ENCODE measurements at regions of chr14 and their contacts with region 1.

Region 1: GRCh38 chr14:24431569-24432258 is 2.0 kb downstream of the KHNYN start:
- H3K4me3 ChIP-seq: no peak overlapping the region
- H3K27ac ChIP-seq: peak overlapping the region; percentile 43
- H3K4me1 ChIP-seq: peaks cover 3% of the 10 kb centered on the region; the same call in 1 of the 2 replicates
- CTCF ChIP-seq: peak; percentile 99

Region 2: DNA sequence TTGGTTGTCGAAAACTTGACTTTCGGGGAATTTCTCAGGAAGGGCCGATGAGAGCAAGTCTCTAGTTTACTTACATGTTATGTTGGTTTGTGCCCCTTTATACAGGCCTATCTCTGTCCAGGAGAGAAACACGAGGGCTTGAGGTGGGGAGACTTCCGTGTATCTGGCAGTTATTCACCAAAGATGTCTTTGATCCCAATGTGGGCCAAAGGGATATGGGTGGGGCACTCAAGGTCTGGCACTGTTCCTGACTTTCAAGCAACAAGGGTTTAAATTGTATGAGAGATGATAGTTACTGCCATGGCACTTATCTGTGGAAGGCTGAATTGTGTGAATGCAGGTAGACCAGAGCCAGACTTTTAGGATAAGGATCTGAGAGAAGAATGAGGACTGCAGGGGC is 615.3 kb before region 1 on chr14:
- CTCF ChIA-PET with region 1: no interaction called
- POLR2A ChIA-PET with region 1: no interaction called
- H3K4me3 ChIP-seq: no peak overlapping the region
- H3K27ac ChIP-seq: no peak overlapping the region
- H3K4me1 ChIP-seq: no peaks in the 10 kb centered on the region
- CTCF ChIP-seq: no peak

Region 3: DNA sequence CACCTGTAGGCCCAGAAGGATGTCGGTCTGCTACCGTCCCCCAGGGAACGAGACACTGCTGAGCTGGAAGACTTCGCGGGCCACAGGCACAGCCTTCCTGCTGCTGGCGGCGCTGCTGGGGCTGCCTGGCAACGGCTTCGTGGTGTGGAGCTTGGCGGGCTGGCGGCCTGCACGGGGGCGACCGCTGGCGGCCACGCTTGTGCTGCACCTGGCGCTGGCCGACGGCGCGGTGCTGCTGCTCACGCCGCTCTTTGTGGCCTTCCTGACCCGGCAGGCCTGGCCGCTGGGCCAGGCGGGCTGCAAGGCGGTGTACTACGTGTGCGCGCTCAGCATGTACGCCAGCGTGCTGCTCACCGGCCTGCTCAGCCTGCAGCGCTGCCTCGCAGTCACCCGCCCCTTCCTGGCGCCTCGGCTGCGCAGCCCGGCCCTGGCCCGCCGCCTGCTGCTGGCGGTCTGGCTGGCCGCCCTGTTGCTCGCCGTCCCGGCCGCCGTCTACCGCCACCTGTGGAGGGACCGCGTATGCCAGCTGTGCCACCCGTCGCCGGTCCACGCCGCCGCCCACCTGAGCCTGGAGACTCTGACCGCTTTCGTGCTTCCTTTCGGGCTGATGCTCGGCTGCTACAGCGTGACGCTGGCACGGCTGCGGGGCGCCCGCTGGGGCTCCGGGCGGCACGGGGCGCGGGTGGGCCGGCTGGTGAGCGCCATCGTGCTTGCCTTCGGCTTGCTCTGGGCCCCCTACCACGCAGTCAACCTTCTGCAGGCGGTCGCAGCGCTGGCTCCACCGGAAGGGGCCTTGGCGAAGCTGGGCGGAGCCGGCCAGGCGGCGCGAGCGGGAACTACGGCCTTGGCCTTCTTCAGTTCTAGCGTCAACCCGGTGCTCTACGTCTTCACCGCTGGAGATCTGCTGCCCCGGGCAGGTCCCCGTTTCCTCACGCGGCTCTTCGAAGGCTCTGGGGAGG is 120.8 kb before region 1 on chr14 and contains the start of gene LTB4R:
- CTCF ChIA-PET with region 1: interaction called, 33 read pairs
- POLR2A ChIA-PET with region 1: interaction called, 6 read pairs
- H3K4me3 ChIP-seq: no peak within 1 kb of the TSS
- H3K27ac ChIP-seq: no peak within 1 kb of the TSS
- H3K4me1 ChIP-seq: no peaks in the 10 kb centered on the region
- CTCF ChIP-seq: no peak

Region 4: DNA sequence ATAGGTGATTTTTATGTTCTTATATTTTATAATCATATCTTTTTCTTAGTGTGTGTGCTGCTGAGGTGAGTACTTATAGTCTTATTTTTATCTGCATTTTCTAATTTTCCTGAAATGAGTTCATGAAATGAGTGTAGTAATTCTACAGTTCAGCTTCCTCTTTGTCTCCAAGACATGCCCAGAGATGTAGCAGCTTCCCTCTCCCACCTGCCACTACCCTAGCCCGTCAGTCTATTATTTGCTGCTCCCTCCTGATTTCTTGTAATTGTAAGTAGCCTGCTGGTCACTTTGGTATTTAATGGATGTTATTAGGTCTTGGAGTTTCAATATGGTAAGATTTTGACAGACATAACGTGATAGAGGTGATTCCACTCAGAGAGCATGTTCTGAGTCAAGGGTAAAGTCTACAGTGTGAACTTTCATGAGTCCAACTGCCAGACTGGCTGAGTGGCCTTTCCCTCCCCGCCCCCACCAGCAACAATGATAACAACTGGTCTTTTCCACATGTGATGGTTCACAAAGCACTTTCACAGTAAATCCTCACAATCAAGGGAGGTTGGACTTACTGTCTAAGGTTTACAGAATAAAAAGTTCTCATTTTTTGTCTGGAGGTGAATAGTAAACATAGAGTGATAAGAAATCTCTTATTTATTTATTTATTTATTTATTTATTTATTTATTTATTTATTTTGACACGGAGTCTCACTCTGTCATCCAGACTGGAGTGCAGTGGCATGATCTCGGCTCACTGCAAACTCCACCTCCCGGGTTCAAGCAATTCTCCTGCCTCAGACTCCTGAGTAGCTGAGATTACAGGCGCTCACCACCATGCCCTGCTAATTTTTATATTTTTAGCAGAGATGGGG is 87.7 kb before region 1 on chr14:
- CTCF ChIA-PET with region 1: interaction called, 468 read pairs
- POLR2A ChIA-PET with region 1: no interaction called
- H3K4me3 ChIP-seq: no peak overlapping the region
- H3K27ac ChIP-seq: no peak overlapping the region
- H3K4me1 ChIP-seq: no peaks in the 10 kb centered on the region
- CTCF ChIP-seq: no peak

Region 5: DNA sequence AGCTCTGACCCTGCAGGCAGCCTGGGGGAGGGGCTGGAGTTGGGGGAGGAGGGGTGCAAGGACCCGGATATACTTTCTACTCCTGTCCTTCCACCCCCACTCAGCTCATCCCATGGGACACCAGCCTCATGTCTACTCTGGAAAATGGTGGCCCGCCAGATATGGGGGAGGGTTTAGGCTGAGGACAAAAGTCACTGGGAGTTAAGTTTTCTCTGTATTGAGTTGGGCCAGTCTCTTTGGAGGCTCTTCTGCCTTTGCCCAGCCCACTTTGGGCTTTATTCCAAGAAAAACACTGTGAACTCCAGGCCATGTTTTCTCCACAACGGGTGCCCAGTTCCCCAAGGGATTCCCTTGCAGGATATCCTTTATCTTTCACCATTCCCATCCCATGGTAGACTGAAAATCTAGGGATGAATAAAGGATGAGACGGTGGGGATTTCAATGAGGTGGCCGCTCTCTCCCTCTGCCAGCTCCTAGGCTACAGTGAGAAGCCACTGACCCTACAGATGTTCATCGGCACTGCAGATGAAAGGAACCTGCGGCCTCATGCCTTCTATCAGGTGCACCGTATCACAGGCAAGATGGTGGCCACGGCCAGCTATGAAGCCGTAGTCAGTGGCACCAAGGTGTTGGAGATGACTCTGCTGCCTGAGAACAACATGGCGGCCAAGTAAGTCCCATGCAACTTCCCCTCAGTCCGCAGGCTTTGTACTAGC is 58.9 kb before region 1 on chr14:
- CTCF ChIA-PET with region 1: interaction called, 29 read pairs
- POLR2A ChIA-PET with region 1: interaction called, 22 read pairs
- H3K4me3 ChIP-seq: no peak overlapping the region
- H3K27ac ChIP-seq: peak overlapping the region; percentile 50; the same call in 1 of the 2 replicates
- H3K4me1 ChIP-seq: peaks cover 18% of the 10 kb centered on the region
- CTCF ChIP-seq: no peak

Region 6: DNA sequence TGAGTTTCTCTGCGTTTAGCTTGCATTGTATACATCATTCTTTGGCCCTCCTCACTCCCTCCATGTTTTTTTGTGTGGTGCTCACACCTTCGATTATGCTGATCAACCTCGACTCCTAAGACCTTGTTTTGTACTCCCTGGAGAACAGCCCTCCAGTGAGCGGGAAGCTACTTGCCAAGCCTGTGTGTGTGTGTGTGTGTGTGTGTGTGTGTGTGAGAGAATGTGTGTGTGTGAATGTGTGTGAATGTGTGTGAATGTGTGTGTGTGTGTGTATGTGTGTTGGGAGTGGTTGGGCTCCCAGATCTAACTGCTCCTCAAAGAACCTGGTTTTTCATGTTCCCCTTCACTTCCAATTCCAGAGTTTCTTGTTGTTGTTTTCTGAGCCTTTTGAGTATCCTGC is 26.9 kb before region 1 on chr14:
- CTCF ChIA-PET with region 1: interaction called, 11 read pairs
- POLR2A ChIA-PET with region 1: interaction called, 5 read pairs
- H3K4me3 ChIP-seq: no peak overlapping the region
- H3K27ac ChIP-seq: no peak overlapping the region
- H3K4me1 ChIP-seq: peaks cover 6% of the 10 kb centered on the region; the same call in 1 of the 2 replicates
- CTCF ChIP-seq: no peak

Region 7: DNA sequence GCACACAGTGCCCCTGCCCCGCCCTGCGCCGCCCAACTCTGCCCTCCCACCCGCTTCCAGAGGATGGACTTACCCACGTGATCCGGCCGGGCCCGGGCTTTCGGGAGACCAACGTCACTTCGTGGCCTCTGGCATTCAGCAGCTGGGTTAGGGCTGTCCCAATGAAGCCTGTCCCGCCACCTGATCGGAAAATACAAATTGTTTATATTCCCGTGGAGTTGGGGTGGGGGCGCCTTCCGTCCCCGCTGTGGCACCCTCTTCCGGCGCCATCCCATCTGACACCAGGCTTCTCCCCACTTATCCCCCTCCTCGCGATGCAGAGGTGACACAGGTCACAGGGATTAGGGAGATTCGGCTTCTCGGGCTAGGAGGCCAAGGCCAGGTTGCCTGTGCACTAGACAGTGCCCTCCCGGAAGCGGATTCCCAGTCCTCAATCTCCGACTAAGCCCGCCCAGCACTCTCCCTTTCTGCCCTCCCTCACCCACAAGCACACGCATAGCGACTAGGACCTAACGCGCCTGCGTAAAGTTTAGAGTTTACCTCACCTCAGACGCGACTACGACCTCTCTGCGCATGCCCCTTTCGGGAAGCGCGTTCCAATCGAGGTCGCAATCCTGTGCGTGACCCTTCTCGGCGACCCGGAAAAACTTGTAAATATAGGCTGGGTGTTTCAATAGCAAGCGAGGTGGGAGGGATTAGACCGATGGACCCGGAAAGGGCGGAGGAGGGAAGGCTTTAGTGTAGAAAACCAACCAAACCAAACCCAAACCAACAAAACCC is 10.7 kb after region 1 on chr14 and contains the start of gene SDR39U1:
- CTCF ChIA-PET with region 1: interaction called, 33 read pairs
- POLR2A ChIA-PET with region 1: interaction called, 40 read pairs
- H3K4me3 ChIP-seq: peak within 1 kb of the TSS; percentile 71
- H3K27ac ChIP-seq: peak within 1 kb of the TSS; percentile 93
- H3K4me1 ChIP-seq: peaks cover 8% of the 10 kb centered on the region
- CTCF ChIP-seq: 0 out of 2 replicates have a peak, but pooled peaks have one; percentile 36

Measured in HEK293 (cell line).